Posterior cingulate gyrus (tissue), 11 donors: ENCODE measurements at regions of chr10 and their contacts with region 1.

Region 1: GRCh38 chr10:37976091-37976879 is at the start of gene ZNF25:
- DNase-seq: peak; percentile 98 to 99 (median 98)

Region 2: DNA sequence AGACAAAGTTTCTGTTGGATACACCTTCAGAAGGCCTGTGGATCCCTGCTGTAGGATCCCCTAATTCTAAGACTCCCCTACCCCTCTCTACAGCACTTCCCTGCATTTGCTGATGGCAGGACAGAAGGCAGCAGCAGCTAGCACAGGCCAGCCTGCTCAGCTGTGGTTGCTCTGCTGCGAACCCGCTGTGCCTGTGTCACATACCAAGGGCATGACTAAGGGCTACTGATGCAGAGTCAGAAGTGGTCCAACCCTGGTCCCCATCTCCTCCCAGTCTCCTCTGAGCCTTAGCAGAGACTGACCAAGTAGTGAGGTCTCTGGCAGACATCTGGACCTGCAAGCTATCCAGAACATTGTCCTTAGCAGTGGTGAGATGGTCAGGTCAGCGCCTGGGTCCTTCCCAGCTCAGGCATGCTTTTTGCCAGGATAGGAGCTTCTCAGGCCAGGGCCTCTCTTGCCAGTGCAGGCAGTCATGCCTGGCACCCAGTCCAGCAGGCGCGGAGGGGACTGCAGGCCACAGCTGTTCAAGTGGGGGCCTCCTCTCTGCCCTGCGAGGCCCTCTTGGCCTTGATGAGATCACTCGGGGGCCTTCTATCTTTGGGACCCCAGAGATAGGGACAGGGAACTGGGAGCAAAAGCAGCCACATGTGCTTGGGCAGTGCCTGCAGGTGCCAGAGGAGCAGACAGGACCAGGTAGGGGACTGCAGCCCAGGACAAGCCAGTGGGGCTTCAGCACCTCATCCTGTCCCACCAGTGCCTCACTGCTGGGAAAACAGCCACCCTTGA is 265.3 kb before region 1 on chr10:
- intact Hi-C with region 1: no loop called
- DNase-seq: peak in 1 of 10 donors; percentile 74

Region 3: DNA sequence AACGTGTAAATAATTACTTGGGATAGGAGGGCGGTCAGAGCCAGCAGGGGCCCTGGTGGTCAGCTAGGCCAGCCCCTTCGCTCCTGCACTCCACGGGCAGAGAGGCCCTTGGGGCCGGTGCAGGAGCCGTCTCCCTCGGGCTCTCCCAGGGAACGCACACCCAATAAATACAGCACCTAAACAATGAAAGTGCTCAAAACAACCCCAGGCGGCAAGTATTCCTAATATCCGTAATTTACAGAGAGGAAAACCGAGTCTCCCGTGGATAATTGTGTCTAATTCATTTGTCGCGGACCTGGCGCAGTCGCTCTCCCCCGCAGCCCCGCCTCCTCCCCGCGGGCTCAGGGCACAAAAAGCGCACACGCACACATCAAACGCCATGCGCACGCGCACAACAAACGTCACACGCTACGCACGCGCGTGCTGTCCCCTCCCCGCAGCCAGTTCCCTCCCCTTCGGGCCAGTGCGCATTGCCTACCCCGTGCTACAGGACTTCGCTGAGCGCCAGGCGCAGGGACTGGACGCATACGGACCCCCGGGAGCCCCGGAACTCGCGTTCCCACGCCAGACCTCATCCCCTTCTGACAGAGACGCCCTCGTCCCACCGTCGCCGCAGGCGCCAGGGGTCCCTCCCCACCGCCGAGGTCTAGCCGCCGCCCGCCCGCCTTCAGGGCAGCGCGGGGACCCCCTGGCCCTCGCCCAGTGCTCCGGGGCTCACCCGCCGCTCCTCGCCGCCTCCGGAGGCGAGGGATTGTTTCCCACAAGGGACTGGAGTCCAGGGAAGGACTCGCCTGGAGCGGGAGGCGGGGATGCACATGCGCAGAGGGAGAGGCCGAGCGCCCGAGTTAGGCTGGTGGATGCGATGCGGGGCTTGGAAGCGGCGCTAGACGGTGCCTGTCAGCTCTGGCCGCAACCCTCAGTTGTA is 118.7 kb before region 1 on chr10 and contains the start of gene ZNF248:
- intact Hi-C with region 1: loop called (anchors 1 kb)
- DNase-seq: peak; percentile 91 to 99 (median 95)

Region 4: GRCh38 chr10:38010119-38010903 is 34.0 kb after region 1 on chr10 and contains the start of gene ZNF33A:
- intact Hi-C with region 1: loop called (anchors 1 kb)
- DNase-seq: peak; percentile 80 to 98 (median 92)

Region 5: DNA sequence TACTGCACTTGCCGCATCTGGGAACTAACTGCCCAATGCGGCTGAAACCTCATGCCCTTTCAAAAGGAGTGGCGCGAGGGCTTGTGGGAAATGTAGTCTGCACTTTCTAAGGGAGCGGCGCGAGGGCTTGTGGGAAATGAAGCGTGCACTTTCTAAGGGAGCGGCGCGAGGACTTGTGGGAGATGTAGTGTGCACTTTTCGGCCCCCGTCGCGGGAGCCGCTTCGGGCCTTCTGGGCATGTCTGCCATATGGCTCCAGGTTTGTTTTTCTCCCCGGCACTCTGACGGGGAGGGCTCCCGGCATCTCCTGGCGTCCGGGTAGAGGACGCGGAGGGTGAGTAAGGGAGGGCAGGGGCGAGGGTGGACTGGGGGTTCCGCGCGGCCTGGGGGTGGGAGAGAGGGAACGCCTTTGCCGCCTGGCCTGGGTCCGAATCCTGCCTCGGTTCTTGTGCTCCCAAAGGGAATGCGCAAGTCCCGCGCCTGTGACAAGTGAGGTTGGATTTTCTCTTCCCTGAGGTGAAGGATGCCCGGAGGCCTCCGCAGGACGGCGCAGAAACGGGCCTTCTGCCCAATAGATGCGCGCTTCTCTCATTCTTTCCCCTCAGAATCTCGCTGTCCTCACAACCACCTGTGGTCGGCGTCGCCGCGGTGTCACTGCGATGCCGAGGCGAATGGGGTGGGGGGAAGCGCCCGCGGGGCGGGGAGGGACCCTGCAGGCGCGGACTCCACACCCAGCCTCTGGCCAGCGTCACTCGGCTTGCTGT is 118.1 kb after region 1 on chr10 and contains the start of gene ZNF37A:
- intact Hi-C with region 1: loop called (anchors 1 kb)
- DNase-seq: peak; percentile 89 to 99 (median 96)

Region 6: GRCh38 chr10:38146579-38147333 is 170.5 kb after region 1 on chr10:
- intact Hi-C with region 1: no loop called
- DNase-seq: peak in 1 of 10 donors; percentile 53